ENCODE measurements at regions of chr2 and their contacts with region 1.

Region 1: GRCh38 chr2:150895968-150896367 is 365.7 kb downstream of the RBM43 start:
- DNase-seq: no peak
- H3K4me3 ChIP-seq: no peak overlapping the region
- H3K27ac ChIP-seq: no peak overlapping the region
- H3K4me1 ChIP-seq: no peaks in the 10 kb centered on the region
- H3K27me3 ChIP-seq: no peaks in the 10 kb centered on the region
- CTCF ChIP-seq: no peak
- EP300 ChIP-seq: no peak
- POLR2A ChIP-seq: no peak
- RAD21 ChIP-seq: no peak

Region 2: DNA sequence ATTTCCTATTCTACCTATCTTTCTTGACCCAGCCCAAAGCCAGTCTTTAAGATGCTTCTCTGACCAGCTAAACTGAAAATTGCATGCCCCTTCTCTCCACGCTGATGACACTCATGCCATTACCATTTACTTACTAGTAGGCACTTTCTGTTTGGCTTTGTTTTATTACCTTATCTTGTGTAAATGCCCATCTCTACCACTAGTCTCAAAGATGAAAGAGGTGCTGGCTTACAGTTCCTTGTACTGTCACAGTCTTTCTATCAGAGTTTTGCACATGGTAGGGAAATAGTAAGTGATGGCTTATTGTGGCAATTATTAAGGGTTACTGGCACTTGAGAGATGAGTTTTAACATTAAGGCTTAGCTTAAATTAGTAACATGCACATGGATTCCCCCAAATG is 13.6 kb after region 1 on chr2:
- CTCF ChIA-PET with region 1: interaction called, 18 read pairs
- POLR2A ChIA-PET with region 1: no interaction called
- DNase-seq: no peak
- H3K4me3 ChIP-seq: no peak overlapping the region
- H3K27ac ChIP-seq: no peak overlapping the region
- H3K4me1 ChIP-seq: peaks cover 0 to 3% (median 1%) of the 10 kb centered on the region in 4 experiments; a peak in 1 of 7 replicates
- H3K27me3 ChIP-seq: no peaks in the 10 kb centered on the region
- CTCF ChIP-seq: peak in 1 of 3 experiments; percentile 46; a peak in 2 of 4 replicates
- EP300 ChIP-seq: no peak
- POLR2A ChIP-seq: no peak
- RAD21 ChIP-seq: peak in 1 of 2 experiments; percentile 33; a peak in 3 of 4 replicates

Region 3: GRCh38 chr2:151071382-151071781 is 175.4 kb after region 1 on chr2:
- CTCF ChIA-PET with region 1: no interaction called
- POLR2A ChIA-PET with region 1: no interaction called
- DNase-seq: peak in 1 of 2 experiments; percentile 9
- H3K4me3 ChIP-seq: no peak overlapping the region
- H3K27ac ChIP-seq: no peak overlapping the region
- H3K4me1 ChIP-seq: peaks cover 0 to 11% (median 9%) of the 10 kb centered on the region in 4 experiments; a peak in 4 of 7 replicates
- H3K27me3 ChIP-seq: no peaks in the 10 kb centered on the region
- CTCF ChIP-seq: peak; percentile 30 to 60 (median 45)
- EP300 ChIP-seq: no peak
- POLR2A ChIP-seq: no peak
- RAD21 ChIP-seq: peak; percentile 71 to 78

Measured in H1 (cell line).